ENCODE measurements at regions of chr16 and their contacts with region 1.

Region 1: DNA sequence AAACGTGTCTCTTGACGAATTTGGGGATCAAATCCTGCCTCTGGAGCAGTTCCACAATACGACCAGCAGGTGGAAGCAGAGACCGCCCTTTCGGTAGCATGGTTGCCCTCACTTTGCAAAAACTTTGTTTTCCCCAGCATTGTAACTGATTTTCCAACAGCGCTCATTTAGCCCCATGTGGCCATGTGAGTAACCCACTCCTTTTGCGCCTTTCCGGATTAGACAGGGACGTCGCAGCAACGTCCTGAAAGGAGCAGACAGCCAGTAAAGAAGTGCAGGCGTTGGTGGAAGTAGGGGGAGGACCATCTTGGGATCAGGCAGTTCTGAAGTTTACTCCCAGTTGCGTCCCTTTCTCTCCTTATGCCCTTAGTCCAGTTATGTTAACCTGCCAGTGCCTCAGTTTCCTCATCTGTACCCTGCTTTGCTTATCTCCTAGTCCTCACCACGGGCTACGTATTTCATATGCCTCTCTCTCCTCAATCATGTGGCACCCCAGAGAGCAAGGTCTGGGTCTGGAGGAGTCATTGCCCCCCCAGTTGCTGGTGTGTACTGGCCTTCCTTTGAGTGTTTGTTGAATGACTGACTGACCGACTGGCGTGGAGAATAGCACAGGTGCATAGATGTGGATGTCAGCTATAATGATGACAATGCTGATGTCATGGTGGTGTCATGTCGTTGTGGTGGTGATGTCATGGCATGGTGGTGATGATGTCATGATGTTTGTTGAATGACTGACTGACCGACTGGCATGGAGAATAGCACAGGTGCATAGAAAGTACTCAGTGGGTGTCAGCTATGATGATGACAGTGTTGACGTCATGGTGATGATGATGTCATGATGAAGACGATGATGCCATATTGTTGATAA is 22.3 kb downstream of the TMEM114 start:
- DNase-seq: peak; percentile 88
- H3K4me3 Mint-ChIP-seq: no peak overlapping the region
- H3K27ac Mint-ChIP-seq: no peak overlapping the region
- H3K4me1 Mint-ChIP-seq: peaks cover 23% of the 10 kb centered on the region
- H3K27me3 Mint-ChIP-seq: no peaks in the 10 kb centered on the region
- CTCF ChIP-seq: peak; percentile 99

Region 2: GRCh38 chr16:8621572-8622314 is 53.8 kb after region 1 on chr16 and contains the start of gene METTL22:
- CTCF ChIA-PET with region 1: no interaction called
- intact Hi-C with region 1: loop called (anchors 2 kb)
- DNase-seq: peak; percentile 98
- H3K4me3 Mint-ChIP-seq: peak within 1 kb of the TSS; percentile 91
- H3K27ac Mint-ChIP-seq: peak within 1 kb of the TSS; percentile 66
- H3K4me1 Mint-ChIP-seq: peaks cover 9% of the 10 kb centered on the region
- H3K27me3 Mint-ChIP-seq: peaks cover 39% of the 10 kb centered on the region
- CTCF ChIP-seq: no peak
- total RNA-seq, gene METTL22: 71.1 and 71.7 TPM in 2 replicates

Region 3: GRCh38 chr16:8644211-8645140 is 76.5 kb after region 1 on chr16:
- CTCF ChIA-PET with region 1: no interaction called
- intact Hi-C with region 1: no loop called
- DNase-seq: no peak
- H3K4me3 Mint-ChIP-seq: no peak overlapping the region
- H3K27ac Mint-ChIP-seq: no peak overlapping the region
- H3K4me1 Mint-ChIP-seq: no peaks in the 10 kb centered on the region
- H3K27me3 Mint-ChIP-seq: no peaks in the 10 kb centered on the region
- CTCF ChIP-seq: no peak

Region 4: DNA sequence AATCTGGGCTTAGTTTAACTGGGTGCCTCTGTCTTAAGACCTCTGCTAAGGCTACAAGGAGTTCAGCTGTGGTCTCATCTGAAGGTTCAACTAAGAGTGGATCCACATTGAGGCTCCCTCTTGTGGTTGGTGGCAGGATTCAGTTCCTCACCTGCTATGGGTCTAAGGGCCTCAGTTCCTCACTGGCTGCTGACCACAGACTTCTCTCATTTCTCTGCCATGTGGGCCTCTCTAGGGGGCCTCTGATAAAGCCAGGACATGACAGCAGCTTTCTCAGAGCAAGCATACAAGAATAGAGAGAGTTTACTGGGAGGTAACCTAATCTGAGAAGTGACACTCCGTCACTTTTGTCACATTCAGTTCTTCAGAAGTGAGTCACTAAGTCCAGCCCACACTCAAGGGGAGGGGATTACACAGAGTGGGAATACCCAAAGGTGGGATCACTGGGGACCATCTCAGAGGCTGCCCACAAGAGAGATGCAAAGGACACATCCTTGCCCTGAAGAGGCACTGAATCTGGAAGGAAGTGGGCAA is 87.3 kb after region 1 on chr16:
- CTCF ChIA-PET with region 1: interaction called, 4 read pairs
- intact Hi-C with region 1: loop called (anchors 1 kb)
- DNase-seq: peak; percentile 62
- H3K4me3 Mint-ChIP-seq: no peak overlapping the region
- H3K27ac Mint-ChIP-seq: no peak overlapping the region
- H3K4me1 Mint-ChIP-seq: no peaks in the 10 kb centered on the region
- H3K27me3 Mint-ChIP-seq: peaks cover 9% of the 10 kb centered on the region
- CTCF ChIP-seq: peak; percentile 62

Region 5: DNA sequence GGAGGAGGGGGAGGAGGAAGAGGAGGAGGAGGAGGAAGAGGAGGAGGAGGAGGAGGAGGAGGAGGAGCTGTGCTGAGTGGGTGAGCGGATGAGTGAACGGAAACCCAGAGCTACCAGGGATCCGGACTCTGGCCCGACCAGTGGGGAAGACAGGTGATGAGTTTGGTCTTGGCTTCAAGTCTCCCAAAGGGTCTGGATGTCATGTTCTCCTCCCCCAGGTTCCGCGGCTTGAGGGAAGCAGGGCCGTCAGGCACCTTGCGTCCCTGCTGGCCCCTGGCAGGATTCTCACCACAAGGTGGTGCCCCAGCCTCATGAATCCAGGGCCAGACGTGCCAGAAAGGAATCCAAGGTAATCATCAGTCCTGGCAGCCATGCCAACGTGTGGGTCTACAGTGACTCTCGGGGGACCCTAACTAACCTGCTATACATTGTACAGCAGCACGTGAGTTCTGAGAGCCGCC is 92.9 kb after region 1 on chr16:
- CTCF ChIA-PET with region 1: interaction called, 4 read pairs
- intact Hi-C with region 1: loop called (anchors 1 kb)
- DNase-seq: peak; percentile 93
- H3K4me3 Mint-ChIP-seq: no peak overlapping the region
- H3K27ac Mint-ChIP-seq: no peak overlapping the region
- H3K4me1 Mint-ChIP-seq: no peaks in the 10 kb centered on the region
- H3K27me3 Mint-ChIP-seq: peaks cover 9% of the 10 kb centered on the region
- CTCF ChIP-seq: peak; percentile 90

Region 6: GRCh38 chr16:8797364-8798173 is 229.6 kb after region 1 on chr16 and contains the starts of genes PMM2 and TMEM186:
- CTCF ChIA-PET with region 1: interaction called, 3 read pairs
- intact Hi-C with region 1: loop called (anchors 2 kb)
- DNase-seq: peak; percentile 98
- H3K4me3 Mint-ChIP-seq: peak within 1 kb of the TSS; percentile 99
- H3K27ac Mint-ChIP-seq: peak within 1 kb of the TSS; percentile 44
- H3K4me1 Mint-ChIP-seq: peaks cover 41% of the 10 kb centered on the region
- H3K27me3 Mint-ChIP-seq: no peaks in the 10 kb centered on the region
- CTCF ChIP-seq: no peak
- total RNA-seq, gene PMM2: 88.3 and 92.8 TPM in 2 replicates
- total RNA-seq, gene TMEM186: 20.9 and 23.6 TPM in 2 replicates

Region 7: DNA sequence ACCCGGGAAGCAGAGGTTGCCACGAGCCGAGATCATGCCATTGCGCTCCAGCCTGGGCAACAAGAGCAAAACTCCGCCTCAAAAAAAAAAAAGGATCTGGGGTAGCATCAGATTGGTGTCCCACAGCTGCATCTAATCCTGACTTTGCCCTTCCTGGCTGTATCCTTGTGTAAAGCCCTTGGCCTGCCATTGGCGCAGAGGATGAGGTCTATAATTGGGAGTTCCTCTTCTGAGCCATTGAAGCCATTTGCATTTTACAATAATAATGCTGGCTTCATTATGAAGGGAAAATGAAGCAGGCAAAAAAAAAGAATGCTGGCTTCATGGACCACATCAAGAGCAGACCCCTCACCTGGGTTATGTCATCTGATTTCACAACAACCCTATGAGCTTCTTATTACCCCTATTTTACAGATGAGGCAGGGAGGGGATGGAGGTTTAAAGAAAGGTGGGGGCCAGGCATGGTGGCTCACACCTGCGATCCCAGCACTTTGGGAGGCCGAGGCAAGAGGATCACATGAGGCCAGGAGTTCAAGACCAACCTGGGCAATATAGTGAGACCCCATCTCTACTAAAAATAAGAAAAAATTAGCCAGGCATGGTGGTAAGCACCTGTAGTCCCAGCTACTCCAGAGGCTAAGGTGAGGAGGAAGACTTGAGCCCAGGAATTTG is 313.0 kb after region 1 on chr16:
- CTCF ChIA-PET with region 1: no interaction called
- intact Hi-C with region 1: loop called (anchors 2 kb)
- DNase-seq: no peak
- H3K4me3 Mint-ChIP-seq: no peak overlapping the region
- H3K27ac Mint-ChIP-seq: no peak overlapping the region
- H3K4me1 Mint-ChIP-seq: peaks cover 29% of the 10 kb centered on the region
- H3K27me3 Mint-ChIP-seq: no peaks in the 10 kb centered on the region
- CTCF ChIP-seq: no peak